Caco-2 (cell line): ENCODE measurements at regions of chr2 and their contacts with region 1.

Region 1: GRCh38 chr2:37168217-37168981 is 11.6 kb upstream of the EIF2AK2 start:
- DNase-seq: peak in 1 of 2 experiments; percentile 62
- H3K4me3 ChIP-seq: no peak overlapping the region
- H3K4me3 Mint-ChIP-seq: no peak overlapping the region
- H3K27ac Mint-ChIP-seq: no peak overlapping the region
- H3K4me1 ChIP-seq: peaks cover 21% of the 10 kb centered on the region
- H3K4me1 Mint-ChIP-seq: no peaks in the 10 kb centered on the region
- H3K27me3 ChIP-seq: no peaks in the 10 kb centered on the region
- H3K27me3 Mint-ChIP-seq: no peaks in the 10 kb centered on the region
- CTCF ChIP-seq: peak; percentile 72 to 79

Region 2: DNA sequence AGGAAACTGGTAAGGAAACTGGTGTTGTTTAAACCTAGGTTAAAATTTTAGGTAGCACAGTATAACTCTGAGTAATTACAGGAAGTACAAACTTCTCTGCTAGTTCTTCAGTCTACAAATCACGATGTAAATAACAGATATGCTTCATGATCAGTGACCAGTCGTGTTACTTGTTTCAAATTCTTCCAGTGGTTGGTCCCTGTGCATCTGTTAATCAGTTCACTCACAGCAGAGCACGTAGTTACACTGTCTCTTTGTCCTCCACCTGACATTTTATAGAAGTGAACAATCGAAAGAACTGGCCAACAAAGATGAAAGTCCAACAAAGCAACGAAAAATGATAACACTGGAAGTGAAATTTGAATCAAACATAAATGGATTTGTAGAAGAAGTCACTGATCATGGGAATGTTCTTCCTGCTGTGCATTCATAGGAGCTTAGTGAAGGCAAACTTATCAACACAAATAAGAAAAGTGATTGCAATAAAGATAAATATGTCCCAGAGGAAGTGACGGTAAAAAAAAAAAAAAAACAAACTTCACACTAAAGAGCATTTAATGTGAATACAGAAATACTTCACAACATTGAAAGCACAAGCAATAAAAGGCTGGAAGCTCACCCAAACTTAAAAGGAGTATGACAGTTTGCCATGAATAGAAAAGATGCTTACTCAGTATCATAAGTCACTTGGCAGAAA is 18.6 kb before region 1 on chr2:
- CTCF ChIA-PET with region 1: interaction called, 5 read pairs
- POLR2A ChIA-PET with region 1: interaction called, 10 read pairs
- intact Hi-C with region 1: no loop called
- DNase-seq: no peak
- H3K4me3 ChIP-seq: no peak overlapping the region
- H3K4me3 Mint-ChIP-seq: no peak overlapping the region
- H3K27ac Mint-ChIP-seq: no peak overlapping the region
- H3K4me1 ChIP-seq: peaks cover 9% of the 10 kb centered on the region; the same call in 1 of the 2 replicates
- H3K4me1 Mint-ChIP-seq: peaks cover 28% of the 10 kb centered on the region
- H3K27me3 ChIP-seq: no peaks in the 10 kb centered on the region
- H3K27me3 Mint-ChIP-seq: no peaks in the 10 kb centered on the region
- CTCF ChIP-seq: no peak

Region 3: GRCh38 chr2:37156857-37157714 is 11.3 kb before region 1 on chr2 and contains the start of gene EIF2AK2:
- CTCF ChIA-PET with region 1: no interaction called
- POLR2A ChIA-PET with region 1: no interaction called
- intact Hi-C with region 1: loop called (anchors 1 kb)
- DNase-seq: peak; percentile 91
- H3K4me3 ChIP-seq: peak within 1 kb of the TSS; percentile 85
- H3K4me3 Mint-ChIP-seq: peak within 1 kb of the TSS; percentile 96
- H3K27ac Mint-ChIP-seq: peak within 1 kb of the TSS; percentile 95
- H3K4me1 ChIP-seq: peaks cover 12% of the 10 kb centered on the region
- H3K4me1 Mint-ChIP-seq: peaks cover 37% of the 10 kb centered on the region
- H3K27me3 ChIP-seq: no peaks in the 10 kb centered on the region
- H3K27me3 Mint-ChIP-seq: no peaks in the 10 kb centered on the region
- CTCF ChIP-seq: no peak
- total RNA-seq, gene EIF2AK2: 41.7 and 50.1 TPM in 2 replicates

Region 4: DNA sequence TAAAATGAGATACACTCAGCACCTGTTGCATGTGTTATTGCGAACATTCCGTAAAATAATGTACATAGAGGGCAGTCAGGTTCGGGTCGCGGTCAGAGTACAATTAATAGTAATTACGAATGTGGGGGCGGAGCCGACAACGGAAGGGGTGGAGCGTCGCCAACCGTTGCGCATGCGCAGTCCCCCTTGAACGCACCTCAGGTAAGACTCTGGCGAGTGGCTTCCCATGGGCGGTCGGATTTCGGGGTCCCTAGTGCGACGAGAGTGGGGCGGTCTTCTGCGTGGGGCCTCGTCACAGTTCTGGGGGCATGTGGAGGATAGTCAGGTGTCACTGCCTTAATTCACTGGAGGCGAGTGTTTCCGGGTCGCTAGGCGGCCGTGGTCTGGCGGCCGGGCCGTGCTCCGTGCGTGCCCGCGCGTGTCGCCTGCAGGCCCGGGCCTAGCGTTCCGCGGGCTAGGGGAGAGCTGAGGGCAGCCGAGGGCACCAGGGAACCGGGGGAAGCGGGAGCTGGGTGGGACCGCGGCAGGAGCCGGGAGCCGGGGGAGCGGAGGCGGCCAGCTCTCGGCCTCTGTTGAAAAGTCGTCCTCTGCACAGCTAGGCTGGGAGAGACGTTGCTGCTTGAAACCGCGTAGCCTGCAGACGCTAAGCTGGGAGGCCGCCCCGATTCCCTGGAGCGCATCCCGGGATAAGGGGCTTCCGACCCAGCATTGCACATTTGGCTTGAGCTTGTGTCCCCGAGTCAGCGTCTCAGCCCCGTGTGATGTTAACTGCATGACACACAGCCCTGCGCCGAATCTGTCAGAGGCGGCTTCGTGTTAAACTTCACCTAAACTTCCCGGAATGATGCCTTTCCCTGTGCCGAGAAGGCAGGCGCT is 28.2 kb after region 1 on chr2 and contains the start of gene CEBPZOS:
- CTCF ChIA-PET with region 1: no interaction called
- POLR2A ChIA-PET with region 1: no interaction called
- intact Hi-C with region 1: loop called (anchors 1 kb)
- DNase-seq: peak; percentile 89 to 93
- H3K4me3 ChIP-seq: peak within 1 kb of the TSS; percentile 57
- H3K4me3 Mint-ChIP-seq: peak within 1 kb of the TSS; percentile 92
- H3K27ac Mint-ChIP-seq: peak within 1 kb of the TSS; percentile 98
- H3K4me1 ChIP-seq: no peaks in the 10 kb centered on the region
- H3K4me1 Mint-ChIP-seq: no peaks in the 10 kb centered on the region
- H3K27me3 ChIP-seq: no peaks in the 10 kb centered on the region
- H3K27me3 Mint-ChIP-seq: no peaks in the 10 kb centered on the region
- CTCF ChIP-seq: no peak
- total RNA-seq, gene CEBPZOS: 55.3 and 56.0 TPM in 2 replicates

Region 5: DNA sequence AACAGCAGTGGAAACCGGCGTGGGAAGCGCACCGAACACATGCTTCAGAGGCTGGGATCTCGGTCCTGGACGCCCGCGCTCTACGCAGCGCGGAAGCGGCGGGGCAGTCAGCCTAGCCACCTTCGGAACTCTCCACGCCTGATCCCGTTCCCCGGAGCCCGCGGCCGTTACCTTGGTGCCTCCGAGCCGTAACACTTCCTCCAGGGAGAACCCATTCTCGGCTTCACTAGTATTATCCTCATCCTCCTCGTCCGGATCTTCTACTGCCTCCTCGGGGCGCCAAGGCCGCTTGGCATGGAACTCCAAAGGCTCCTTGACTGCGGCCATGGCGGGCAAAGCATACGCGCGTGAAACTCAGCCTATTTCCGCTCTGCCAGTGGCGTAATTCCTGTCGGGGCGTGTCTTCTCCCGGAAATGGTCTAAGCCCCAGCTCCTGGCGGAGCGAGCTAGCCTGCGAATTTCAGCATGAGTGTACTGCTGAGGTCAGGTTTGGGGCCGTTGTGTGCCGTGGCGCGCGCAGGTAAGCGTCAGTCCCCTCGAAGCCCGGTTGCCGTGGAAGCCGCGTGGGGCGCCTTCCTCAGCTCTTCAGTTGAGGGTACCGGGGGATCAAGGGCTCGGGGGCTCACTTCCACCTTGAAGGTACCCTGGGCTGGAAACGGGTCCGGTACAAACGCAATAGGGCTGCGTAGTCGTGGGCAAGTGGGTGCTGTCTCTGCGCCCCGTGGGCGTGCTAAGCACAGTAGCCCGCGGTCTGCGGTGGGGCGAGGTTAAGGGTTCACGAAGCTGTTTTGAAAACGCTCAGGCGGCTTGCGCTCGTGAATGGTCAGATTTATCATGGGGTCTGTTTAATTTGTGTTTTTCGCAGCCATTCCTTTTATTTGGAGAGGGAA is 63.1 kb after region 1 on chr2 and contains the starts of genes CEBPZ and NDUFAF7:
- CTCF ChIA-PET with region 1: no interaction called
- POLR2A ChIA-PET with region 1: no interaction called
- intact Hi-C with region 1: loop called (anchors 1 kb)
- DNase-seq: peak; percentile 91 to 92
- H3K4me3 ChIP-seq: peak within 1 kb of the TSS; percentile 98
- H3K4me3 Mint-ChIP-seq: no peak within 1 kb of the TSS
- H3K27ac Mint-ChIP-seq: no peak within 1 kb of the TSS
- H3K4me1 ChIP-seq: peaks cover 11% of the 10 kb centered on the region
- H3K4me1 Mint-ChIP-seq: peaks cover 7% of the 10 kb centered on the region
- H3K27me3 ChIP-seq: no peaks in the 10 kb centered on the region
- H3K27me3 Mint-ChIP-seq: no peaks in the 10 kb centered on the region
- CTCF ChIP-seq: no peak
- total RNA-seq, gene CEBPZ: 93.3 and 95.4 TPM in 2 replicates
- total RNA-seq, gene NDUFAF7: 34.3 and 38.0 TPM in 2 replicates

Region 6: DNA sequence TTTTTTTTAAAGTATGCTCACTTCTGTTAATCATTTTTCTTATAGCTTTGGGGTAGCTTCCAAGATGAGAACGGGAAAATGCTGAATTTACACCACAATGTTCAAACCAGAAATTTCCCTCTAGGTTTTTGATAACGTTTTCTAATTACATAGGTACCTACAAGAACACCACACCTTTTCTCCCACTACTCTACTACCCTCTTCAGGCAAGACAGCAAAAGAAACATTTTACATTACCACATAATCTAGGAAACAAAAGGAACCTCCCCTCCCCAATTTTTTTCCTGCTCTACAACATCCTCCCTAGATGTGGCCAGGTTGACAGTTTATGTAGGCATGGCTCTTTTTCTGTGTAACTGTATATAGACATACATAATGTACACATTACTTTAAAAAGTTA is 95.4 kb after region 1 on chr2:
- CTCF ChIA-PET with region 1: no interaction called
- POLR2A ChIA-PET with region 1: no interaction called
- intact Hi-C with region 1: loop called (anchors 1 kb)
- DNase-seq: no peak
- H3K4me3 ChIP-seq: no peak overlapping the region
- H3K4me3 Mint-ChIP-seq: no peak overlapping the region
- H3K27ac Mint-ChIP-seq: no peak overlapping the region
- H3K4me1 ChIP-seq: no peaks in the 10 kb centered on the region
- H3K4me1 Mint-ChIP-seq: peaks cover 18% of the 10 kb centered on the region
- H3K27me3 ChIP-seq: no peaks in the 10 kb centered on the region
- H3K27me3 Mint-ChIP-seq: no peaks in the 10 kb centered on the region
- CTCF ChIP-seq: peak in 1 of 2 experiments; percentile 16